Activated CD4-positive, alpha-beta T cell treated with anti-CD3 and anti-CD28 coated beads for 36 hours (primary cell): ENCODE measurements at regions of chr1 and their contacts with region 1.

Region 1: GRCh38 chr1:109090196-109091077 is at the start of gene TMEM167B:
- DNase-seq: peak; percentile 95
- ATAC-seq: peak; percentile 88
- H3K4me3 Mint-ChIP-seq: peak within 1 kb of the TSS; percentile 85
- H3K27ac Mint-ChIP-seq: peak within 1 kb of the TSS; percentile 84
- H3K4me1 Mint-ChIP-seq: peaks cover 30% of the 10 kb centered on the region
- H3K27me3 Mint-ChIP-seq: no peaks in the 10 kb centered on the region
- total RNA-seq, gene TMEM167B: 26.8 to 28.4 TPM

Region 2: DNA sequence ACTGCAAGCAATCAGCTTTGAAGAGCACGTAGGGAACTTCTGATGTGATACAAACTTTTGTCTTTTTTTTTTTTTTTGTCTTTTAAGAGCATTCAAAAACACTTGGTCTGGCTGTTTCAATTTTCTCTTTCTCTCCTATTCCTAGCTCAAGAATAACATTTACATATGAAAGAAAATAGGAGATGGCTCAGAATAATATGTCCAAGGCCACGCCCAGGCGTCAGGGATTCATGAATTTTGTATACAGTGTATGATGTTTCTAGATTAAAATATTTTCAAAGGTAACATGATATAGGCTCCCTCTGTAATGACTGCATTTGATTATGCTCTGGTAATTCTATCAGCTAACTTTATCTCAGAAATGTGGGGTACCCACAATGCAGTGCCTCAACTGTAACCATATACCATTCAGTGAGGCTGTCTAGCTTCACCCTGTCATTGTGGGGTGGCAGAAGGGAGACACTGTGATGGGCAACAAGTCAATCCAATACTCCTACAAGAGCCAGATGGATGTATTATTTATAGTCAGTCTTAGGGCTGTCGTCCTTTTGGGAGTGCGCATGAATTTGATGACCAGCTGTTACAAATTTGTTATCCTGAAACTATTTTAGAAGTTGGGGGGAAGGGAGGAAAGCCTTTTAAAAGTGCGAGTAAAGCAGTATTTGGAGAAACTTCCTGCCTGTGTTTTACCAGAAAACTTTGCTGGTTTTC is 232.0 kb before region 1 on chr1:
- CTCF ChIA-PET with region 1: no interaction called
- POLR2A ChIA-PET with region 1: no interaction called
- intact Hi-C with region 1: no loop called
- DNase-seq: no peak
- ATAC-seq: no peak
- H3K4me3 Mint-ChIP-seq: no peak overlapping the region
- H3K27ac Mint-ChIP-seq: no peak overlapping the region
- H3K4me1 Mint-ChIP-seq: peaks cover 3% of the 10 kb centered on the region
- H3K27me3 Mint-ChIP-seq: peaks cover 10% of the 10 kb centered on the region

Region 3: GRCh38 chr1:108877348-108878159 is 212.9 kb before region 1 on chr1:
- CTCF ChIA-PET with region 1: interaction called, 3 read pairs
- POLR2A ChIA-PET with region 1: no interaction called
- intact Hi-C with region 1: loop called in 1 of 2 experiments (anchors 2 kb)
- DNase-seq: no peak
- ATAC-seq: peak; percentile 2
- H3K4me3 Mint-ChIP-seq: peak overlapping the region; percentile 91
- H3K27ac Mint-ChIP-seq: peak overlapping the region; percentile 78
- H3K4me1 Mint-ChIP-seq: peaks cover 5% of the 10 kb centered on the region
- H3K27me3 Mint-ChIP-seq: peaks cover 5% of the 10 kb centered on the region

Region 4: DNA sequence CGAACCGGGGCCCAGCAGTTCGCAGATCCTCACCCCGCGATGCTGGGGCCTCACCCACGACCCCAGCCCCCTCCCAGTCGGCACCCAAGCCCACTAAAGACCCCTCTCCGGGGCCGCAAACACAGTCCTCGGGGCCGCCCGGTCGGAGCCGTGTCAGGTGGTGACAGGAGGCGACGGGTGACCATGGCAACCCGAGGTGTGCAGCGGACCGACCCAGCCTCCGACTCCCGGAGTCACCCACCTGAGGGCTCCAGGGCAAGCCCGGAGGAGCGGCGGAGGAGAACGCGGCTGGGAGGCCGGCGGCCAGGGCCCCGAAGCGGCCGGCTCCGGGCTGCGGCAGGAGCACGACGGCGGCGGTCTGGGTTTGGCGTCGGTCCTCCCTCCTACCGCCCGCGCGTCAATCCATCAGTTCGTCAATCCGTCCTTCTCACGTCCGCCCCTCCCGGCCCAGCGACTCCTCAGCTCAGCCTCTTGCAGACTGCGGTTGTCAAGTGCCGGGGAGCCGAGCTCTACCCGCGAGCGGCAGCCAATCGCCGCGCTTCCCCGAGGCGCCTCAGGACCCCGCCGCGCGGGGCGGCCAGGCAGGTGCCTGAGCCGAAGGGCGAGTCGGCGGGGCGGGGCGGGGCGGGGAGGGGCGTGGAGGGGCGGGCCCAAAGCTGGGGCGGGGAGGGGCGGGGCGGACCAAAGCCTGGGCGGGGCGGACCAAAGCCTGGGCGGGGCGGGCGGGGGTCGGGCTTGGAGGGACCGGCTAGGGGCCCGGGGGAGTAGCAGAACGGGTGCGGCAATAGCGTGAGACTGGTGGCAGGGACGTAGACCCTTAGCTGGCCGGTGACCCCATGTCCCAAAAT is 48.6 kb before region 1 on chr1 and contains the start of gene WDR47:
- CTCF ChIA-PET with region 1: interaction called, 6 read pairs
- POLR2A ChIA-PET with region 1: interaction called, 4 read pairs
- intact Hi-C with region 1: loop called (anchors 1 kb)
- DNase-seq: peak; percentile 98
- ATAC-seq: peak; percentile 99
- H3K4me3 Mint-ChIP-seq: peak within 1 kb of the TSS; percentile 82
- H3K27ac Mint-ChIP-seq: peak within 1 kb of the TSS; percentile 65
- H3K4me1 Mint-ChIP-seq: peaks cover 16% of the 10 kb centered on the region
- H3K27me3 Mint-ChIP-seq: no peaks in the 10 kb centered on the region
- total RNA-seq, gene WDR47: 6.9 to 7.6 TPM

Region 5: DNA sequence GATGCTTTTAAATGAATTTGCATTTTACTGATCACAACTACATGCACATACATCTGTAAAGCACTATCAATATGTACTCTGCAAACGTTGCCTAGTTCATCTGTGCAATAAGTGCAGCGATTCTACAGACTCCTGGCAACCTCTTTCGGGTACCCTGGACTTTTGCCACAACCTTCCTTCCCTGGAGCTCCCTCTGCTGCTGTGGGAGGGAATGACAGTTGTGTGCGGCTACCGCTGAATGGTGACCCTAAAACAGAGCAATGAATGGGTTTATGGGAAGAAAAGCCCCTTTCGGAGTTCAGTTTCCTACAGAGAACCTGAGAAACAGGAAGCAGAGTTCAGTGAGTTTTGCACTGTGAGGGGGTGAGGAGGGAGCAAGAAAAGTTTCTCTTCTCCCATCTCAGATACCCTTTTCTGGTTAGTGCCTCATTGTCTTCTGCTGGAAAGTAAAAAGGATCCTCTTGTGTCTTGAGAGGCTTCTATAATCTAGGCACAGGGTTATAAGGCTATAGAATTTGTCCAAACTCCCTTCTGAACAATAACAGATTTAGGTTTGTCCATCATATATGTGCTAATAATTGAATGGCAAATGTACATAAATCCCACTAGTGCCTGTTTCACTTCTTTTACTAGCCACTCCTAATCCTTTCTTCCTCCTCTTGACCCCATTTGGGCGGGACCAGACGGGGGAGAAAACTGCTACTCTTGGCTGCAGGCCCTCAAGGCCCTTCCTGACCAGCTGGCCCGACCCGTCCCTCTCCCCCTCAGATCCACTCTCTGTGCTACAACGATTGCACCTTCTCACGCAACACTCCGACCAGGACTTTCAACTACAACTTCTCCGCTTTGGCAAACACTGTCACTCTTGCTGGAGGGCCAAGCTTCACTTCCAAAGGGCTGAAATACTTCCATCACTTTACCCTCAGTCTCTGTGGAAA is 103.5 kb after region 1 on chr1:
- CTCF ChIA-PET with region 1: no interaction called
- POLR2A ChIA-PET with region 1: no interaction called
- intact Hi-C with region 1: loop called in 1 of 2 experiments (anchors 2 kb)
- DNase-seq: peak; percentile 80
- ATAC-seq: peak; percentile 62
- H3K4me3 Mint-ChIP-seq: no peak overlapping the region
- H3K27ac Mint-ChIP-seq: no peak overlapping the region
- H3K4me1 Mint-ChIP-seq: peaks cover 8% of the 10 kb centered on the region
- H3K27me3 Mint-ChIP-seq: no peaks in the 10 kb centered on the region

Region 6: DNA sequence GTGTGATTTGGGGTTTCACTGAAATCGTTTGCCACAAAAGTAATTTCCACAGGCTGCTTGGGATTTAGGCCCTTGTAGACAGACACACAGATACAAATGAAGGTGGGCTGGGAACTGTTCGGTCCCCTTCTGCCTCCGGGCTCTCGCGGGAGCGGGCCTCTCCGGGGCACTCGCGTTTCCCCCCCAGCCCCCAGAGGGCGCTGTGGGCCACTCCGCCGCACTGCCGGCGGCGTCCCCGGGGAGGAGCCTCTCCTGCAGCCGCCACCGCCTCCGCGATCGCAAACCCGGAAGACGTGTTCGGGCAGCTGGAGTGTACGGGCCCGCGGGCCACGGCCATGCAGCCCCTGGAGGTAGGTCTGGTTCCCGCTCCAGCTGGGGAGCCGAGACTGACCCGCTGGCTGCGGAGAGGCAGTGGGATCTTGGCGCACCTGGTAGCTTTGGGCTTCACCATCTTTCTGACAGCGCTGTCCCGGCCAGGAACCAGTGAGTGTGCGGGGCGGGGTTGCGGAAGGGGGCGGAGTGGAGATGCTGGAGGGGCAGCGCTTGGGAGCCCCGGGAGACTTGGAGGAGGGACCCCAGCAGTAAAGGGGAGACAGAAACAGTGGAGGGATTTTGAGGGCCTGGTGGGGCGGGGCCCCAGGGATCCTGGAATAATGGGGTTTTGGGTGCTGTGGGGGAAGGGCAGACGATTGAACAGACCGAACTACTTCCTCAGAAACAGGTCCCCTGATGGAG is 403.5 kb after region 1 on chr1 and contains the start of gene CYB561D1:
- CTCF ChIA-PET with region 1: no interaction called
- POLR2A ChIA-PET with region 1: no interaction called
- intact Hi-C with region 1: loop called in 1 of 2 experiments (anchors 1 kb)
- DNase-seq: peak; percentile 95
- ATAC-seq: peak; percentile 89
- H3K4me3 Mint-ChIP-seq: peak within 1 kb of the TSS; percentile 98
- H3K27ac Mint-ChIP-seq: peak within 1 kb of the TSS; percentile 90
- H3K4me1 Mint-ChIP-seq: peaks cover 45% of the 10 kb centered on the region
- H3K27me3 Mint-ChIP-seq: no peaks in the 10 kb centered on the region
- total RNA-seq, gene CYB561D1: 7.1 to 8.7 TPM